ENCODE measurements at regions of chr11 and their contacts with region 1.

Region 1: DNA sequence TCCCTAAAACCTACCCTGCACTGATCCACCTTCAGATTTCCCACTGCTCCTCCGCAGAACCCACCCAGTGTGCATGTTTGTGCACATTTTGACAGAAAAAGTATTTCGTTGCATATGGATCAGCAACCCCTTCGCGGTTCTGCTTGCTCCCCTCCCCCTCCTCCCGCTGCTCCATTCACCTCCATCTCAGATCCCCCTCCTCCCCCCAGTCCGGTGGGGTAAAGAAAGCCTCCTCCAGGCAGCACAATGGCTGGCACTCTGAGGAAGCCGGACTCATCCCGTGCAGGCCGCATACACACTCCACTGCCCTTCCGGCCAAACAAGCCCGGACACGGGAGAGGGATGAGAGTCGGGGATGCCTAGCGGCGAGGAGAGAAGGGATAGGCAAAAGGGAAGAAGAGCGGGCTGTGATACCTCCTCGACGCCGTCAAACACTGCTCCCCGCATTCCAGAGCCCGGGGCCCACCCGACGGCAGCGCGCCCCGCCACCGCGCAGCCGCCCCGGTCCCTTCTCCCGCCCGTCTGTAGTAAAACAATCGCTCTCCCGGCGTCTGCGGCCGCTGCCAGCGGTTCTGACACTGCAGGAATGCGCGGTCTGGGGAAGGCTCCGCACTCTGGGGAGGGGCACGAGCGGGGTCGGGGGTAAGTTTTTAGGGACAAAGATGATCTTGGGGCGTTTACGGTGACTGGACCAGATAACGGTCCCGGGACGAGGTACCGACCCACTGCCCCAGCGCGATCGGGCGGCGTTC is 915 bp downstream of the FEZ1 start:
- DNase-seq: no peak
- H3K4me3 ChIP-seq: no peak overlapping the region
- H3K27ac ChIP-seq: no peak overlapping the region
- H3K4me1 ChIP-seq: no peaks in the 10 kb centered on the region
- H3K27me3 ChIP-seq: no peaks in the 10 kb centered on the region
- CTCF ChIP-seq: no peak

Region 2: GRCh38 chr11:125941619-125942611 is 446.8 kb after region 1 on chr11:
- CTCF ChIA-PET with region 1: interaction called, 13 read pairs
- POLR2A ChIA-PET with region 1: no interaction called
- intact Hi-C with region 1: no loop called
- DNase-seq: peak in 1 of 2 experiments; percentile 51
- H3K4me3 ChIP-seq: no peak overlapping the region
- H3K27ac ChIP-seq: no peak overlapping the region
- H3K4me1 ChIP-seq: no peaks in the 10 kb centered on the region
- H3K27me3 ChIP-seq: no peaks in the 10 kb centered on the region
- CTCF ChIP-seq: peak; percentile 81

Region 3: DNA sequence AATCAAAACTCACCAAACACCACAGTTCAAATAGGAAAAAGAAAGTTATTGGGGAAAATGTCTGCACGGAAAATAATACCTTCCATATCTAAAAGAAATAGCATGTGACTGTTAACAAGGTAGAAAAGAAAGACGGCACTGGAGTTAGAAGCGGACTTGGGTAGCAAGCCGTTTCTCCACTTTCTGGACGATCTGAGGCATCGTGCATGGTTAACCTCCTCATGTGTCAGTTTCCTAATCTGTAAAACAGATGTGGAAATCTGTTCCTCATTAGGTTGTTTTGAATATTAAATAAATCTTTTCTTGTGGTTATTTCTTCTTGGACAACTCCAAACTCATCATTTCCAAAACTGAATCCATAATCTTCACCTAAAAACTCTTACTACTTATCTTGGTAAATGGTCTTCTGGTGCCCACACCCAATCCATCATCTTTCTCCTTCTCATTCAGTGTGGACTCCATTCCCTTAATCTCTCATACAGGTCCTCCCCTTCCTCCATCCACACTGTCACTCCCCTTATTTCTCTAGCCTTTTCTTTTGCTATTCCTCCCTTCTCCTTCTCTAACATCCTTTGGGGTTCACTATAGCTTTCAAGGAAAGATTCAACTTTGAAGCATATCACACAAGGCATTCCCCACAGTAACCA is 504.2 kb after region 1 on chr11:
- CTCF ChIA-PET with region 1: no interaction called
- POLR2A ChIA-PET with region 1: no interaction called
- intact Hi-C with region 1: no loop called
- DNase-seq: no peak
- H3K4me3 ChIP-seq: no peak overlapping the region
- H3K27ac ChIP-seq: no peak overlapping the region
- H3K4me1 ChIP-seq: no peaks in the 10 kb centered on the region
- H3K27me3 ChIP-seq: no peaks in the 10 kb centered on the region
- CTCF ChIP-seq: no peak

Measured in PC-9 (cell line).